Ascending aorta (tissue), 2 donors: ENCODE measurements at regions of chr14 and their contacts with region 1.

Region 1: DNA sequence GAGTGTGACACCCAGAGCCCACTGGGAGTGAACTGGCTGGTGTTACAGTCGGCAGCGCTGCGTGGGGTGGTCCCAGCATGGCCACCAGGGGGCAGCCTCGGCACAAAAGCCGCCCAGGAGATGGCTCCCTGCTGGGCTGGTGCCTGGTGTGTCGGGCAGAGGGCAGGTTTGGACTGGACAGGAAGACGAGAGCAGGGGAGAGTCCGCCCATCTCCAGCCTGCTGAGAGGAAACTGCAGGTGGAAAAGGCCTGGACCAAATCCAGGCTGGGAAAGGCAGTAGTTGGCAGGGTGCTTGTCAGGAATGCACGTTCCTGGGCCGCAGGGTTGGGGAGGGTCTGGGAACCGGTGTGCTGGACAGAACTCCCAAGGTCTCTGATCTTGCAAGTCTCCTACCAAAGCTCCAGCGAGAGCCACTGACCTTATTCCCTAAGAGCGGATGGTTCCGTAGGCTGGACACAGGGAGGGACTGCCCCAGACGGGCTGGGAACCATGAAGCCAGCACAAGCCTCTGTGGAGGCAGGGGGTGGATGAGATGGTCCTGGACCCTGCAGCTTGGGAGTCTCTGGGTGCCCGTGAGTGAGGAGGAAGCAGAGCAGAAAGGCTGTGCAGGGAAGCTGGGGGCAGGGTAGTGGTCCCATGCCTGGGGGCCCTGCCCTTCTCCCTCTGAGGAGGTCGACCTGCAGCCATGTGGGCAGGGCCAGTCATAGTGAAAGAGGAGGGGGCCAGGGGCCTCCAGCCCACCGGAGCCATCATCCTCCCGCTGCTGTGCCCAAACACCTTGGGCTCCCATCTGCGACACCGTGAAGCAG is 1.8 kb downstream of the AHNAK2 start:
- DNase-seq: peak in 1 of 2 donors; percentile 90
- H3K4me3 ChIP-seq: peak overlapping the region in 1 of 2 donors; percentile 73
- H3K27ac ChIP-seq: peak overlapping the region; percentile 92 to 97
- H3K4me1 ChIP-seq: peaks cover 33 to 62% of the 10 kb centered on the region in 2 donors
- H3K27me3 ChIP-seq: no peaks in the 10 kb centered on the region
- CTCF ChIP-seq: peak; percentile 84 to 90 (median 87)

Region 2: GRCh38 chr14:104689109-104689880 is 287.1 kb before region 1 on chr14 and contains the start of gene INF2:
- intact Hi-C with region 1: loop called (anchors 10 kb)
- DNase-seq: no peak
- H3K4me3 ChIP-seq: peak within 1 kb of the TSS; percentile 90 to 92
- H3K27ac ChIP-seq: peak within 1 kb of the TSS; percentile 80 to 82
- H3K4me1 ChIP-seq: peaks cover 17 to 39% of the 10 kb centered on the region in 2 donors
- H3K27me3 ChIP-seq: no peaks in the 10 kb centered on the region
- CTCF ChIP-seq: no peak
- total RNA-seq, gene INF2: 249 TPM

Region 3: GRCh38 chr14:104723648-104724406 is 252.6 kb before region 1 on chr14 and contains the start of gene ADSS1:
- intact Hi-C with region 1: no loop called
- DNase-seq: peak in 1 of 2 donors; percentile 85
- H3K4me3 ChIP-seq: peak within 1 kb of the TSS; percentile 83 to 94
- H3K27ac ChIP-seq: peak within 1 kb of the TSS; percentile 84 to 89
- H3K4me1 ChIP-seq: peaks cover 24 to 47% of the 10 kb centered on the region in 2 donors
- H3K27me3 ChIP-seq: no peaks in the 10 kb centered on the region
- CTCF ChIP-seq: peak; percentile 80 to 84 (median 83)
- total RNA-seq, gene ADSS1: 30.2 TPM

Region 4: GRCh38 chr14:104795788-104796686 is 180.4 kb before region 1 on chr14:
- intact Hi-C with region 1: no loop called
- DNase-seq: no peak
- H3K4me3 ChIP-seq: peak overlapping the region; percentile 52 to 78
- H3K27ac ChIP-seq: peak overlapping the region; percentile 96 to 99
- H3K4me1 ChIP-seq: peaks cover 29 to 40% of the 10 kb centered on the region in 2 donors
- H3K27me3 ChIP-seq: no peaks in the 10 kb centered on the region
- CTCF ChIP-seq: no peak

Region 5: DNA sequence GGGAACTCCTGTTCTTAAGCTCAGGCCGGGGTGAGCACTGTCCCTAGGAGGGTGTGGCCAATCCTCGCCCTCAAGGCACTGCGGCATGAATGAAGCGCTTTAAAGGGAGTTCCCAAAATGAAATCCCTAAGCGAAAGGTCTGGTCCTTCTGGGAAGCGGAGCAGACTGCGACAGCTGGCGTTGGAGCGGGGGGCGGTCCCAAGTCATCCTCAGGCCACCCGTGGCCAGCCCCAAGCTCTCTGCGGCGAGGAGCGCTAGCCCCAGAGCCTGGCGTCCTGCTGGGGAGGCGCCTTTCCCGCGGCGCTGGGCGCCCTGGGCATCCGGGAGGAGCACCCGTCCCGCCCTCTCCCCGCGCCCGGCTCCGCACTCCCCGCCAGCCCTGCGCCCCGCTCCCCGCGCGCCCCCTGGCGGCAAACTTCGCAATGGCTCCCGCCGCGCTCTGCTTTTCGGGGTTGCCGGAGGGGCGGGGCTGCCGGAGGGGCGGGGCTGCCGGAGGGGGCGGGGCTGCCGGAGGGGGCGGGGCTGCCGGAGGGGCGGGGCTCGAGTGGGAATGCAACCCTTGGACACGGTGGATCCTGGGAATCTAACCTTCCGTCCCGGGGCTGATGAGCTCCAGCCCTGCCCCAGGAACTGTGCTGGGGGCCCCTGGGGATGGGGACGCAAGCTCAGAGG is 150.1 kb before region 1 on chr14:
- intact Hi-C with region 1: loop called (anchors 5 kb)
- DNase-seq: peak; percentile 54 to 94
- H3K4me3 ChIP-seq: peak overlapping the region; percentile 63 to 92
- H3K27ac ChIP-seq: peak overlapping the region; percentile 7 to 59
- H3K4me1 ChIP-seq: peaks cover 8 to 12% of the 10 kb centered on the region in 2 donors
- H3K27me3 ChIP-seq: no peaks in the 10 kb centered on the region
- CTCF ChIP-seq: peak; percentile 56 to 83 (median 79)

Region 6: DNA sequence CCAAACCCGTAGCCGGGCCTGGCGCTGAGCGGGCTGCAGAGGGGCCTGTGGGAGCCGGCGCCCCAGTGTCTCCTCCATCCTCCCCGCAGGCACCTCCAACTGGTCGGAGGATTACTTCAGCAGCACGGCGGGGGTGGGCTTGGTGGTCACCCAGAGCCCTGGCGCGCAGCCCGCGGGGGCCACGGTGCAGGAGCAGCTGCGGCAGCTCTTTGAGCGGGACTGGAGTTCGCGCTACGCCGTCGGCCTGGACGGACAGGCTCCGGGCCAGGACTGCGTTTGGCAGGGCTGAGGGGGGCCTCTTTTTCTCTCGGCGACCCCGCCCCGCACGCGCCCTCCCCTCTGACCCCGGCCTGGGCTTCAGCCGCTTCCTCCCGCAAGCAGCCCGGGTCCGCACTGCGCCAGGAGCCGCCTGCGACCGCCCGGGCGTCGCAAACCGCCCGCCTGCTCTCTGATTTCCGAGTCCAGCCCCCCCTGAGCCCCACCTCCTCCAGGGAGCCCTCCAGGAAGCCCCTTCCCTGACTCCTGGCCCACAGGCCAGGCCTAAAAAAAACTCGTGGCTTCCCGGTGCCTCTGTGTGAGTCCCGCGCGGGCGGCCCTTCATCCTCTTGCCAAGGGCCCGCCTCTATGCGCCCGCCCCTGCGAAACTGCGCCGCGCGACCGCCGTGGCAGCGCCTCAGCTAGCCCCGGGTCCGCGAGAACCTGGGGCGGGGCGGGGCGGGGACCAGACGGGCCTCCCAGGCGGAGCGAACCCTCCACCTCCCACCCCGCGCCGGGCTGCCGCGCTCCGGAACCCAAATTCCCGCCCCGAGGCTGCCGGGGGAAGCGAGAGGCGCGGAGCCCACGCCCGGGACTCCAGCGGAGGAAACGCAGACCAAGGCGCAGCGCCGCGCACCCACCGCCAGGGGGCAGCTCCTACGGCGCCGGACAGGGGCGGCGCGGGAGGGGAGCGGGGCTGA is 43.4 kb before region 1 on chr14:
- intact Hi-C with region 1: loop called (anchors 2 kb)
- DNase-seq: peak; percentile 27 to 94
- H3K4me3 ChIP-seq: peak overlapping the region; percentile 45 to 70
- H3K27ac ChIP-seq: peak overlapping the region; percentile 37 to 62
- H3K4me1 ChIP-seq: peaks cover 0 to 7% of the 10 kb centered on the region in 2 donors
- H3K27me3 ChIP-seq: no peaks in the 10 kb centered on the region
- CTCF ChIP-seq: peak; percentile 72 to 90 (median 74)

Region 7: GRCh38 chr14:104991904-104992255 is 15.5 kb after region 1 on chr14:
- intact Hi-C with region 1: no loop called
- DNase-seq: no peak
- H3K4me3 ChIP-seq: no peak overlapping the region
- H3K27ac ChIP-seq: no peak overlapping the region
- H3K4me1 ChIP-seq: no peaks in the 10 kb centered on the region
- H3K27me3 ChIP-seq: no peaks in the 10 kb centered on the region
- CTCF ChIP-seq: no peak

Region 8: DNA sequence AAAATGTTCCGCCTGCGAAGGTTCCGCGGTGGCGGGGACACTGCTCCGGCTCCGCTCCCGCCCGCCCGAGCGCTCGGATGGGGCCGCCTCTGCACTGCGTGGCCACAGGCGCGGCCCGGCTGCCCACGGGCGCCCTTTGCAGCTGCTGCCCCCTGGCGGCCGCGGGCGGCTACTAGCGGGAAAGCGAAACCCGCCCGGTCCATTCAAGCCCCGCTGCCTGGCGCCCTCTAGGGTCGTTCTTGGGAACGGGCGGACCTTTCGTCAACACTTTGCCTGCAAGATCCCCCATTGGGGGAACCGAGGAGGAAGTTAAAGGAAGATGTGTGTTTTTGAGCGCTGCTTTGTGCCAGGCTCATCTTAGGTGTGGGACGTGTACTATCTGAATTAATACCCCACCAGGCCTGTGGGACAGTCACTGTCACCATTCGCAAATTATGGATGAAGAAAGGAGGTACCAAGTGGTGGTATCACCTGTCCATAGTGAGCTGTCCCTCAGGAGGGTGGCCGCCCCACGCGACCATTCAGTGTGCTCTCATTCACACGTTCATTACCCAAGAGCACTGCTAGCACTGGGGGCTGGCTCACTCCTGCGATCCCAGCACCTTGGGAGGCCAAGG is 69.4 kb after region 1 on chr14:
- intact Hi-C with region 1: loop called (anchors 1 kb)
- DNase-seq: peak in 1 of 2 donors; percentile 95
- H3K4me3 ChIP-seq: peak overlapping the region in 1 of 2 donors; percentile 35
- H3K27ac ChIP-seq: no peak overlapping the region
- H3K4me1 ChIP-seq: no peaks in the 10 kb centered on the region
- H3K27me3 ChIP-seq: no peaks in the 10 kb centered on the region
- CTCF ChIP-seq: peak; percentile 97 to 100 (median 98)

Region 9: GRCh38 chr14:105300792-105301533 is 324.6 kb after region 1 on chr14 and contains the start of gene BRF1:
- intact Hi-C with region 1: loop called (anchors 5 kb)
- DNase-seq: peak; percentile 88 to 98
- H3K4me3 ChIP-seq: peak within 1 kb of the TSS; percentile 62 to 84
- H3K27ac ChIP-seq: peak within 1 kb of the TSS; percentile 93 to 96
- H3K4me1 ChIP-seq: peaks cover 8 to 14% of the 10 kb centered on the region in 2 donors
- H3K27me3 ChIP-seq: no peaks in the 10 kb centered on the region
- CTCF ChIP-seq: no peak
- total RNA-seq, gene BRF1: 60.9 TPM